ENCODE measurements at regions of chr10 and their contacts with region 1.

Region 1: DNA sequence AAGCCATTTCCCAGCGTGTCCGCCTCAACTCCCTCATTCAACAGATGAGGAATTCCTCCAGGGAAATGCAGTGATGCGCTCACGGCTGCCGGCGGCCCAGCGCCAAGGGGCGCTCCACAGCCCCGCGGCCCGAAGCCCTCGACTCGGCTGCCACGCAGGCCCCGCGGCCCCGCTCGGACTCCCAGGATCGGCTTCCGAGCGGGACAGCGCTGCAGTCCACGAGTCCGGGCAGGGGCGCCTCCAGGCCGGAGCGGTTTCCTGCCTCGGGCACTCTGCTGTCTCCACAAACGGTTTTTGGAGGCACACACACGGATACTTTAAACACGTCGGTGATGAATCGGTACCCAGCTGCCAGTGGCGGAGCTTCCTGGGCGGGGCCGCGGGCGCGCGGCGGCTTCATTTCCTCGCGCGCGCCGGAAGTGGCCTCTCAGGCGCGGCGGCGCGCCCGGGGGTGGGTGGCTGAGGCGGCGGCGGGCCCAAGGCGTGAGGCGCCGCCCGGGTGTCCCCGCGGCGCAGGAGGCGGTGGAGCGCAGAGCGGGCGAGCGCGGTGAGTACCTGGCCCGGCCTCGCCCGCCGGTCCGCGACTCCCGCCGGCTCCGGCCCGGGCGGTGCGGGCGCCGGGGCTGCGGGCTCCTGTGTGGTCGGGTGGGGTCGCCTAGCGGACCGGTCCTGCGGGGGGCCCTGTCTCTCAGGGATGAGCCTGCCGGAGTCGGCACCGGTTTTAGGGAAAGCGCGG is at the start of gene CSGALNACT2:
- DNase-seq: peak; percentile 97
- H3K4me3 Mint-ChIP-seq: peak within 1 kb of the TSS; percentile 98
- H3K27ac Mint-ChIP-seq: peak within 1 kb of the TSS; percentile 99
- H3K4me1 Mint-ChIP-seq: peaks cover 59% of the 10 kb centered on the region
- H3K27me3 Mint-ChIP-seq: no peaks in the 10 kb centered on the region
- total RNA-seq, gene CSGALNACT2: 24.7 and 25.9 TPM in 2 replicates

Region 2: DNA sequence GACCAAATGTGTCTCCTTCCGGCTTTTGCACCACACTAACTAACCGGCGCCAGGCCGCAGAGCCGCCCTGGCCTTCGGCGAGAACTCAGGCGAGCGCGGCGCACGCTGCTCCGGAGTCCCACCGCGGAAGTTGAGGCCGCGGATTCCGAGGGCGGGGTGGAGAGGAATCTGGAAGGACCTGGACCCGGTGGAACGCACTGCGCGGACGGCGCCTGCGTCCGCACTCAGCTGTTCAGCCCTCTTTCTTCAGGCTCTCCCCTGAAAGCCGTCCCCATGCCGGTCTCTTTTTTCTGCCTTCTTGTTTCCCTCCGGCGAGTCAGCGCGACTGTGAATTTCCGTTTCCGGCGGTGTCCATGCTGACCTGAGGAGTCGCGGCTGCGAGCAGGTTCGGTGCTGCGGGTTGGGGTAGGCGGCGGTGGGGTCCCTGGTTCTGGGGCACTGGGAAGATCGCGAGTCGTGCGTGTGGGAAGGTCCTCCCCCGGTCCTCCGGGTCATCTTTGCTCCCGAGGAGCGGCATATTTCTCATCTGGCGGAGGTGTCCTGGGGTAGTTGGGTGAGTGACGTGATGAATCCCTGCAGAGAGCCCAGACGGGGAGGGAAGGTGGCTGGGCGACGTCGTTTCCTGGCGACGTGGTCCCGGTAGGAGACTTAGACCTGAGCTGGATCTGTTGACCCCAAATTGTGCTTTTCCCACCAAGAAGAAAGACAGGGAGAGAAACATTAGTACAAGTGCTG is 355.6 kb before region 1 on chr10 and contains the start of gene BMS1:
- intact Hi-C with region 1: loop called (anchors 10 kb)
- DNase-seq: peak; percentile 97
- H3K4me3 Mint-ChIP-seq: peak within 1 kb of the TSS; percentile 93
- H3K27ac Mint-ChIP-seq: peak within 1 kb of the TSS; percentile 96
- H3K4me1 Mint-ChIP-seq: peaks cover 18% of the 10 kb centered on the region
- H3K27me3 Mint-ChIP-seq: peaks cover 5% of the 10 kb centered on the region
- total RNA-seq, gene BMS1: 38.4 and 39.3 TPM in 2 replicates

Region 3: DNA sequence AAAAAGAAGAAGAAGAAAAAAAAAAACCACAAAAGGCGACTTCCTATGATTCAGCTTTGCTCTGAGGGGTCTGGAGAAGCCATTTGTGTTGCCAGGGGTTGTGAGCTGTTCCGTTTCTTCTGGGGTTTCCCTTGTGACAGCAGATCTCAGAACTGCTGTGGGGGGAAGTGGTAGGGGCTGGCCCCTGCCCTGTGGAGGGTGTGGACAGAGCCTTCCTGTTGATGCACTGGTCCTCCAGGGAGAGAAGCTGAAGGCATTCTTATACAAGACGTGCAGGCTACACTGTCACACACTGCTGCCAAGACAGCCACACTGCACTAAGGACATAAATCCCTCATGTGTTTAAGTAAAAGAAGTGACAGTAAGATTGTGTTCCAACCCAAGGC is 17.3 kb before region 1 on chr10:
- intact Hi-C with region 1: loop called (anchors 1 kb)
- DNase-seq: peak; percentile 93
- H3K4me3 Mint-ChIP-seq: peak overlapping the region; percentile 75
- H3K27ac Mint-ChIP-seq: peak overlapping the region; percentile 96
- H3K4me1 Mint-ChIP-seq: peaks cover 44% of the 10 kb centered on the region
- H3K27me3 Mint-ChIP-seq: no peaks in the 10 kb centered on the region

Region 4: GRCh38 chr10:43204943-43205671 is 66.9 kb after region 1 on chr10:
- intact Hi-C with region 1: loop called (anchors 1 kb)
- DNase-seq: peak; percentile 84
- H3K4me3 Mint-ChIP-seq: no peak overlapping the region
- H3K27ac Mint-ChIP-seq: no peak overlapping the region
- H3K4me1 Mint-ChIP-seq: peaks cover 6% of the 10 kb centered on the region
- H3K27me3 Mint-ChIP-seq: no peaks in the 10 kb centered on the region

Region 5: GRCh38 chr10:43407576-43408330 is 269.6 kb after region 1 on chr10:
- intact Hi-C with region 1: loop called (anchors 1 kb)
- DNase-seq: peak; percentile 95
- H3K4me3 Mint-ChIP-seq: peak overlapping the region; percentile 96
- H3K27ac Mint-ChIP-seq: peak overlapping the region; percentile 99
- H3K4me1 Mint-ChIP-seq: peaks cover 32% of the 10 kb centered on the region
- H3K27me3 Mint-ChIP-seq: no peaks in the 10 kb centered on the region